ENCODE measurements at regions of chr9 and their contacts with region 1.

Region 1: GRCh38 chr9:125706661-125707471 is at the start of gene MAPKAP1:
- DNase-seq: peak; percentile 96 to 99 (median 98)
- H3K4me3 ChIP-seq: peak within 1 kb of the TSS; percentile 71 to 100 (median 96)
- H3K27ac ChIP-seq: peak within 1 kb of the TSS in 58 of 59 donors; percentile 35 to 97 (median 86)
- H3K27me3 ChIP-seq: no peaks in the 10 kb centered on the region
- CTCF ChIP-seq: peak in 24 of 56 donors; percentile 7 to 56 (median 34)
- total RNA-seq, gene MAPKAP1: 42.9 to 115 (median 74.5) TPM

Region 2: DNA sequence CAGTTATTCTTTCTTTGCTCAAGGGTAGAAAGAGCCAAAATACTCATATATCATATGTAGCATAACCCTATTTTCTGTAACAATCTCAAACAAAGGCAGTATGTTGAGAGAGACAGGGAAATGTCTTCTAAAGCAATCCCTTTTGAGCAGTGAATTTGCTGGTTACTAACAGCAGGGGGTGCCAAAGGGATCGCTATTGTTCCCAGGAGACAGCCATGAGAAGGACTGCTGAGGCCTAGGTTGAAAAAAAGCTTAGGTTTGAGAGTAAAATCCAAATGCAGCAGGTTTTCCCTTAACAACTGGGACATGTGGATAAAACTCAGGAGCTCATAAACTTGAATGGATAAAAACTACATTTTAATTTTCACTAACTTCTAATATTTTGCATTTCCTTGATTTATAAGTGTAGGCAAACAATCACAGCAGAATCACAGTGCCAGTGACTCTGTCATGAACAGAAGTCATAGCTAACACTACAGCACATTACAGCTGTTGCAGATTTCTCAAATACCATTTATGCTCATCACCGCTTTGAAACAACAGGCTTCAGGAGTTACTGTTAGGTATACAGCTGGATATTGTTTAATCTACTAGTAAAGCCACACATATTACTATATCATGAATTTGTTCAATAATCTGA is 148.3 kb before region 1 on chr9:
- intact Hi-C with region 1: loop called in 1 of 2 experiments (anchors 5 kb)
- DNase-seq: peak in 6 of 10 donors; percentile 32 to 81 (median 54)
- H3K4me3 ChIP-seq: no peak overlapping the region
- H3K27ac ChIP-seq: peak overlapping the region in 17 of 59 donors; percentile 2 to 58 (median 22)
- H3K27me3 ChIP-seq: no peaks in the 10 kb centered on the region
- CTCF ChIP-seq: peak; percentile 68 to 92 (median 83)

Region 3: DNA sequence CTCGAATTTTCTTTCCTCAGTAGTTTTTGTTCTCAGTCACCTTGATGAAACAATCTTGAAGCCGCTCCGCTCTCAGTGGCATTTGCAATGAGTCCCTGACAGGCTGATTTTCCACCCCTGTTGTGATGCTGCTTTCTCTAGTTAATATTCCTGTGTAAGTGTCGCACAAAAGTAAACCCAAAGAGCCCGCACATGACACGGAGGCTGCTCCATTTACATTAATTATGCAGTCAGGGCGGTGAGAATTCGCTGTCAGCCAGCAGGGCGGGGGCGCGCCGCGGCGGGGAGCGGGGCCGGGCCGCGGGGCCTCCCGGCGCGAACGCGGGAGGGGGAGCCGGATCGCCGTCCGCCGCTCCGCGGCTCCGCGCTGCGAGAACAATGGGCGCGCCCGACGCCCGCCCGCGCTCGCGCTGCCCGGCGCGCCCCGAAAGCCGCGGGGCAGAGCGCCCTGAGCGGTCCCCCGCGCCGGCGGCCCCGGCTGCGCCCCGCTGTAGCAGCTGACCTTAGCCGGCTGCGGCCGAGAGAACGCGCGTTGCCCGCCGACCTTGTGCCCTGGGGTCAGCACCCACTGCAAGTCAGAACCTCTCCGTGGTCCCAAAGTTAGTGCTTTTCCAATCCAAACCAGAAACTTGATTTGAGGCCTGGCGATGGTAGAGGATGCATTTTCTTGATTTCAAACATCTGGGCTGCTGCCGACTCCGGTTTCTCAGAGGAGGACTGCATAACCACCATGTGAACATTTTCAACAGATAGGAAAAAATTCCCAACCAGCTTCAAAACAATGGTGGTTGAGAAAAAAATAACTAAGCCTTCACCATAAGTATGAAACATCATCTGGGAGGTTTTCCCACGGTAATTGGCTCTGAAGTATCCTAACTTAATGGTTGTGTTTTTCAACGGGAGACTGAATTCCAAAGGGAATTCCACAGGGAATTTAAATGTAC is 182.9 kb after region 1 on chr9:
- intact Hi-C with region 1: loop called in 1 of 2 experiments (anchors 5 kb)
- DNase-seq: peak; percentile 18 to 76 (median 55)
- H3K4me3 ChIP-seq: peak overlapping the region; percentile 40 to 77 (median 63)
- H3K27ac ChIP-seq: peak overlapping the region in 58 of 59 donors; percentile 10 to 89 (median 77)
- H3K27me3 ChIP-seq: no peaks in the 10 kb centered on the region
- CTCF ChIP-seq: peak in 4 of 56 donors; percentile 9 to 19 (median 16)